ENCODE measurements at regions of chr20 and their contacts with region 1.

Region 1: GRCh38 chr20:13525225-13525940 is 113.3 kb downstream of the TASP1 start:
- DNase-seq: peak in 1 of 2 donors; percentile 41
- H3K4me3 ChIP-seq: no peak overlapping the region
- CTCF ChIP-seq: no peak
- POLR2A ChIP-seq: no peak

Region 2: GRCh38 chr20:11980263-11980662 is 1545.1 kb before region 1 on chr20:
- intact Hi-C with region 1: loop called (anchors 10 kb)
- DNase-seq: no peak
- H3K4me3 ChIP-seq: no peak overlapping the region
- CTCF ChIP-seq: no peak
- POLR2A ChIP-seq: no peak

Region 3: DNA sequence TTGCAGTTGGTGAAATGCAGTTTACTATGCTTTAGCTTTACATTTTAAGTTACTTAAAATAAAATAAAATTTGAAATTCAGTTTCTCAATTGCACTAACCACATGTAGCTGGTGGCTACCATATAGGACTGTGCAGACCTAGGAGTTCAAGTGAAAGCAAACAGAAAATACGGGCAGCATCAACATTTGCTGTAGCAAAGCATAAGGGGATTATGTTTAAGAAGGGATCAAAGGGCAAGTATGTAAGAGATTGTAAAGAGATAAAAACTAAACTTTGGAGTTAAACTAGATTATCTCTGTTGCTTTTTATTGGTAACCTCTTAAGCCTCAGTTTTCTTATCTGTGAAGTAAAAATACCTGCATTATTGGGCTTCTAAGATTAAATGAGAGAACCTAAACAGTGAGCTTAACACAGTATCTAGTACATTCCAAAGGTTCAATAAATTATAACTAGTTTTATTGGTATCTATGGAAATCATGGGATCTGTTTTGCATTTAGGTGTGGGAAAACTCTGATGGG is 435.4 kb before region 1 on chr20:
- intact Hi-C with region 1: no loop called
- DNase-seq: no peak
- H3K4me3 ChIP-seq: no peak overlapping the region
- CTCF ChIP-seq: no peak
- POLR2A ChIP-seq: no peak

Region 4: DNA sequence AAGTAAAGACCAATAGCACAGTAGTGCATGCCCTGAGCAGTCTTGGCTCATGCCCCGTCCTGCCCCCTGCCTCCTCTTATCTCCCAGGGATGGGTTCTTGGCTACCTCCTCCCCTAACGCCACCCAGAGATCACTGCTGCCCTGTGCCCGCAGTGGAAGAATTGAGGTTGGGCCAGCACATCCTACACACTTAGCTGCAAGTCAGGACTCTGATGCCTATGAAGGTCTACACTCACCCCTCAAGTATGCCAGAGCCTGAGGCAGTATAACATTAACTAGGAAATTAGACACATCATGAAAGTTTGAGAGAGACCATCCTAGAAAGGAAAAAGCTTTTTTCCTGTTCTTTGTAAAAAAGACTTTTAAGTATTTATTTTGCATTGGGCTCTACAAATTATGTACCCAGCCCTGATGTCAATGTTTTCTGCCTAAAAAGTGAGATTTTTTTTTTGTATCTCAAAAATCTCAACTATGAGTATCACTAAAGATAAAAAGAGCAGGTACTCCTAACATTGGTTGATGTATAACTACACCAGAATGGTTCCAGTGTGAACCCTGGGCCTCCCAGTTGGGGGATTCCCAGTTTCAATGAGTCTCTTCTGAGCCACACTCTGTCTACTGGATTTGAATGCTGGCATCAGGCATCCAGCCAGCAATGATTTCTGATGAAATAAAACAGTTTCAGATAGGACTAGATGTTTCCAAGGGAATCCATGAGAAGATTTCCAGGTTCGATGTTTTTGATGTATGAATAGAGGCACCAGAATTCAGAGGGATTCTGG is 188.9 kb before region 1 on chr20:
- intact Hi-C with region 1: no loop called
- DNase-seq: no peak
- H3K4me3 ChIP-seq: no peak overlapping the region
- CTCF ChIP-seq: no peak
- POLR2A ChIP-seq: no peak

Region 5: DNA sequence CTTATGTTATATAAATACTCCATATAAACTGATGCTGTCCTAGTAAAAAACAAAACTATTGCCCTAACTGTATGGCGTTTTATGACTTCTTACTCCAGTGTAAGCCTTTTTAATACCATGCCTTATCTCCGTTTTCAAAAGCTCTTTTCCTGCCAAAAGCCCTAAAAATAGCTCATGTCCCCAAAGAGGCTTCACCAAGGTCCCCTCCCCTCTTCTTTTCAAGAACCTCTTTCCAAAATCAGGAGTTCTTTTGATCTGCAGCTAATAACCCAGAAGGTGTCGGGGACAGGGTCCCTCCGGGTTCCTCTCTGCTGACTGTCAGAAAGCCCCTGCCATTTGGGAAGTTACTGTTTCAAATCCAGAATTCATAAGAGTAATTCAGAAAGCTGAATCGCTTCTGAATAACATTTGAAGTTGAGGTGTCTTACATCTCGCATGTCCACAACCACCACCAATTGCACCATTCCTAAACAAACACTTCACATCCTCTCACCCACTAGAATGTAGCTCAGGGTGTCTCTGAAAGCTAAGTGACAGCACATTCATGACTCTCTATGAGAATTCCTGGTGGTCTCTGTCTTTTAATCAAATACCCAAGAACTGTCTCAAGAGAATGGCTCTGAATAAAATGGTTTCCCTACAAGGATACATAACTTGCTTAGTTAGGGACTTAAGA is 100.1 kb after region 1 on chr20:
- intact Hi-C with region 1: no loop called
- DNase-seq: no peak
- H3K4me3 ChIP-seq: no peak overlapping the region
- CTCF ChIP-seq: no peak
- POLR2A ChIP-seq: no peak

Region 6: DNA sequence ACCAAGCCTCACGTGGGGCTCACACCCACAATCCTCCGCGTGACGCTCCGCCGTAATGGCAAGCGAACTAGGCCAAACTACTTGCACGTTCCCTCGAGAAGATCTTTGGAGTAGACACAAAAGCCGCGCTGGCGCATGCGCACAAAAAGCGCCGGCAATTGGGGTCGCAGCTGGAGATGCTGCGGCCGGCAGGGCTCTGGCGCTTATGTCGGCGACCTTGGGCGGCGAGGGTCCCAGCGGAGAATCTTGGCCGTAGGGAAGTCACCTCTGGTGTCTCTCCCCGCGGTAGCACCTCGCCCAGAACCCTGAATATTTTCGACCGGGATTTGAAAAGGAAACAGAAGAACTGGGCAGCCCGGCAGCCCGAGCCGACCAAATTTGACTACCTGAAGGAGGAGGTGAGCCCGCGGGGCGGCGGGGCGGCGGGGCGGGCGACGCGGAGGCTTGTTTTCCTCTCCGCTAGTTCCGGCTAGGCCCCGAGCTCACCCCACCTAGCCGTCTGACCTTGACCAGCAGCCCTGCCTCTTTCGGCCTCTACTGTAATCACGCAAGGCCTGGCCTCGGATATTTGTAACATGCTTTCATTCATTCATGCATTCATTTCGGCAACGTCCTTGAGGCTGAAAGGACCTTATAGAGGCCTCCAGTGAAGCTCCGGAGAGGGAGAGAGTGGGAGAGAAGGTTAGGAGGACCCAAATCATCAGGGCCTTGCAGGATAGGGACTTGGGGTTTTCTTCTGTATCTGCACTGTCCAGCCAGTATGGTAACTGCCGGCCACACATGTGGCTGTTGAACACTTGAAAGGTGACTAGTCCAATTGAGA is 259.7 kb after region 1 on chr20 and contains the starts of genes ESF1 and NDUFAF5:
- intact Hi-C with region 1: no loop called
- DNase-seq: peak; percentile 97 to 99
- H3K4me3 ChIP-seq: peak within 1 kb of the TSS; percentile 96
- CTCF ChIP-seq: peak in 1 of 3 donors; percentile 11
- POLR2A ChIP-seq: no peak
- total RNA-seq, gene ESF1: 9.5 to 11.1 (median 10.8) TPM
- total RNA-seq, gene NDUFAF5: 10.4 to 17.5 (median 12.9) TPM

Measured in lower leg skin (tissue), 4 donors.